Heart left ventricle (tissue), 16 donors: ENCODE measurements at regions of chr12 and their contacts with region 1.

Region 1: DNA sequence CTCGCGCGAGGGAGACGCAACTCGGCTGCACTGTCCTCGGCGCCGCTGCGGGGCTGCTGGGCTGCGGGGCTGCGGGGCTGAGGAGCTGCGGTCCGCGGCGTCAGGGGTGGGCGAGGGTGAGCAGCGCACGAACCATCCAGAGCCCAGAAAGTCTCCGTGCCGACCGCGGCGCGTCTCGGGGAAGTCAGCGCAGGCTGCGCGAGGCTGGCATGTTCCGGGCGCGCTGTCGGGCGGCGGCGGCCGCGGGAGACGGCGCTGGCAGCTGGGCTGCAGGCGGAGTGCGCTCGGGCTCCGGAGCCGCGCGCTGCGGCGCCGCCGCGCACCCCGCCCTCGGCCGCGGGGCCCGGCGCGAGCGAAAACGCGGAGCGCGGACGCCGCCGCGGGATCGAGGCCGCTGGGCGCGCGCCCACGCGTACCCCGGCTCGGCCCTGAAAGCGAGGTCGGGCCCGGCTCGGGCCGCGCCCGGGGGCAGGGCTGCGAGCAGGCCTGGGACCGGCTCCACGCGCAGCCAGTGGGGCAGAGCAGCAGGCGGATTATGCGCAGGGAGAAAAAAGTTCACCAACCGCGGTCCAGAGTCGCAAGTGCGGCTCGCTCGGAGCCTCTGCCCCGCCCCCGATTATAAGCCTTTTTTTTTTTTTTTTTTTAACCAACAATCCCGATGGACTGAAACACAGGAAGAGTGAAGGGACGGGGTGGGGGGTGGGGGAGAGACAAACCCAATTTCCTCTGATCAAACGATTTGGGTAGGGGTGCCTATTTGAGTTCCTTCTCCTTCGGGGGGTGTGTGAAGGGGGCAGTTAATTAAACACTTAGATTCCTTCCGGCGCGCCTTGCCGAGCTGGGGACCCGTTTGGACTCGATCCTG is at the start of gene PRICKLE1:
- DNase-seq: peak; percentile 43 to 73 (median 56)
- ATAC-seq: peak; percentile 47 to 85 (median 68)
- H3K4me3 ChIP-seq: peak within 1 kb of the TSS; percentile 74 to 98 (median 87)
- H3K27ac ChIP-seq: peak within 1 kb of the TSS in 11 of 12 donors; percentile 40 to 90 (median 84)
- H3K4me1 ChIP-seq: peaks cover 0 to 38% (median 21%) of the 10 kb centered on the region in 12 donors
- H3K27me3 ChIP-seq: peaks cover 0 to 33% (median 0%) of the 10 kb centered on the region in 9 donors
- CTCF ChIP-seq: no peak
- POLR2A ChIP-seq: peak in 1 of 2 donors; percentile 20
- total RNA-seq, gene PRICKLE1: 15.5 to 39.2 (median 21.1) TPM

Region 2: GRCh38 chr12:42362647-42363260 is 226.9 kb before region 1 on chr12:
- intact Hi-C with region 1: no loop called
- DNase-seq: no peak
- ATAC-seq: no peak
- H3K4me3 ChIP-seq: no peak overlapping the region
- H3K27ac ChIP-seq: no peak overlapping the region
- H3K4me1 ChIP-seq: peaks cover 0 to 12% (median 0%) of the 10 kb centered on the region in 12 donors
- H3K27me3 ChIP-seq: no peaks in the 10 kb centered on the region
- CTCF ChIP-seq: no peak
- POLR2A ChIP-seq: no peak

Region 3: DNA sequence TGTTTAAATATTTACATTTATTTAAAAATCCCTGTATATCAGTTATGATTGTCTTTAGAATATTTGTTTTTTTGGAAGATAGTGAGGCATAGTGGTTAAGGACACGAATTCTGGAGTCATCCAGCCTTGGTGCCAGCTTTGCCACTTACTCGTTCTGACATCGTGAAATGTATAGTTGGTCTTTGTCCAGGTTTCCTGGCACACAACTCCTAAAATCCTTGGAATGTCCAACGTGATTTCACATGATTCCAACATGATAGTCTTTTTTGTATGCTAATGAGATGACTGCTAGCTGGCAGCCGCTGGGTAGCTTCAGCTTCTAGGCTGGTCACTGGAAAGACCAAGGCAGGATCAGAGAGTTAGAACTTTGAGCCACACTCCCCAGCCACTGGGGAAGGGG is 65.0 kb before region 1 on chr12:
- intact Hi-C with region 1: no loop called
- DNase-seq: no peak
- ATAC-seq: no peak
- H3K4me3 ChIP-seq: no peak overlapping the region
- H3K27ac ChIP-seq: no peak overlapping the region
- H3K4me1 ChIP-seq: no peaks in the 10 kb centered on the region
- H3K27me3 ChIP-seq: no peaks in the 10 kb centered on the region
- CTCF ChIP-seq: no peak
- POLR2A ChIP-seq: no peak

Region 4: GRCh38 chr12:42538203-42538602 is 51.5 kb before region 1 on chr12:
- intact Hi-C with region 1: no loop called
- DNase-seq: no peak
- ATAC-seq: no peak
- H3K4me3 ChIP-seq: no peak overlapping the region
- H3K27ac ChIP-seq: no peak overlapping the region
- H3K4me1 ChIP-seq: peaks cover 0 to 17% (median 0%) of the 10 kb centered on the region in 12 donors
- H3K27me3 ChIP-seq: no peaks in the 10 kb centered on the region
- CTCF ChIP-seq: no peak
- POLR2A ChIP-seq: no peak

Region 5: DNA sequence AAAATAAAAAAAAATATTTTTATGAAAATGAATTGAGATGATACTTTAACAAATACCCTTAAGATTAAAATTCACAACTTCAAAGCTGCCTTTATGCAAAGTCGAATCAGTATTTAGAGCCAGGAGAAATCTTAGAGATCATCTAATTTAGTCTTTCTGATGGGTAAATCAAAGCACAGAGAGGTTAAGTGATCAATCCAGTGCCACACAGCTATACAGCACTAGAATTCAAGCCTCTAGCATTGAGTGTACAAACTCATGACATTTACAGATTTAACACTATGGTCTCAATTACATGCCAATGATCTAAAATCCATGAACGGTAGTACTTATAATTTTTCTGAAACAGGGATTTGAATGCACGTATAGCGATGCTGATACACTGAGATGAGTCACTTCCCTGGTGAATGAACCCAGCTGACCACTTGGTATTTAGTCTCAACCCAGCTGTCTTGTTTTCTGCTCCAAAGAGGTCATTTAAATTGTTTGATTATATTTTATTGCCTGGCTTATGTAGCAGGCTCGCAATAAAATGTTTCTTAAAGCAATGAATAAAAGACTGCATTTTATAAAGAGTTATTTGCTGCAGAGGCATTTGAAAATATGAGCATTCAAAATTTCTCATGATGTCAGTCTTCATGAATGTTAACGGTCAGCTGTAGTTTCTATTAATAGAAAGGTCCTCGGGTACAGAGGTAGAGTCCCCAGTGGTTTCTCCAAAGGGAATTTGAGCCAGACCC is 152.2 kb after region 1 on chr12:
- intact Hi-C with region 1: loop called in 3 of 10 experiments (anchors 2 to 5 kb)
- DNase-seq: no peak
- ATAC-seq: peak; percentile 38 to 83 (median 74)
- H3K4me3 ChIP-seq: no peak overlapping the region
- H3K27ac ChIP-seq: peak overlapping the region; percentile 11 to 89 (median 72)
- H3K4me1 ChIP-seq: peaks cover 4 to 68% (median 23%) of the 10 kb centered on the region in 12 donors
- H3K27me3 ChIP-seq: no peaks in the 10 kb centered on the region
- CTCF ChIP-seq: no peak
- POLR2A ChIP-seq: no peak

Region 6: DNA sequence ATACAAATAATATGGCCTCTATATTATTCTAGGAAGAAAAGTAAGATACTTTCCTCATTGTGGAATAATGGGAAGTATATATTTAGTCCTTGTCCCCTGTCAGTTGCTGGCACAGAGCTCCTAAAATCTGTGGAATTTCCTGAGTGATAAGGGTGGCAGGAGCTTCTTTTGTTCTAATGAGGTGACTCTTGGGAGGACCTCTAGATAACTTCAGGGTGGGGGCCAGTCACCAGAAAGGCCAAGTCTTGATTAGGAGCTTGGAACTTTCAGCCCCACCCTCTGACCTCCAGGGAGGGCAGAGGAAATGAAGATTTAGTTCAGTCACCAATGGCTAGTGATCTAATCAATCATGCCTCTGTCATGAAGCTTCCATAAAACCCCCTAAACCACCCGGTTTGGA is 179.8 kb after region 1 on chr12:
- intact Hi-C with region 1: no loop called
- DNase-seq: peak in 1 of 5 donors; percentile 36
- ATAC-seq: peak in 2 of 4 donors; percentile 55 to 63
- H3K4me3 ChIP-seq: no peak overlapping the region
- H3K27ac ChIP-seq: peak overlapping the region in 2 of 12 donors; percentile 43 to 47
- H3K4me1 ChIP-seq: peaks cover 0 to 19% (median 3%) of the 10 kb centered on the region in 12 donors
- H3K27me3 ChIP-seq: no peaks in the 10 kb centered on the region
- CTCF ChIP-seq: no peak
- POLR2A ChIP-seq: no peak

Region 7: DNA sequence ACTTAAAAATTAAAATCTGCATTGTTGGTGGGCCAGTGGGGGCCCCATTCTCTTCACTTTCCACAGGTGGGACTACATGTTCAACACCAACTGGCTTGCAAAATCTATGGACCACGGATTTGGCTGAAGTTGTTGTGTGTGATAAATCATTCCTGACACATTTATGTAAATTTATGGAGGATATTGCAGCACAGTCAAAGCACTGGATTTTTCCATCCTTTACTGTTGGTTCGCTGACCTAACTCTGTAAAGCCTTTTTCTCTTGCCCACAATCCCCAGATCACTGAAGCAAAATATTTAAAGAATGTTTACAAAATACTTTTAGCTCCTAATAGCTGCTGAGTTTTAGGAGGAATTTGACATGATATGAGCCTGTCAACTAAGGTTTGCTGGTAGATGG is 219.5 kb after region 1 on chr12:
- intact Hi-C with region 1: loop called in 1 of 10 experiments (anchors 5 kb)
- DNase-seq: no peak
- ATAC-seq: no peak
- H3K4me3 ChIP-seq: no peak overlapping the region
- H3K27ac ChIP-seq: no peak overlapping the region
- H3K4me1 ChIP-seq: no peaks in the 10 kb centered on the region
- H3K27me3 ChIP-seq: no peaks in the 10 kb centered on the region
- CTCF ChIP-seq: no peak
- POLR2A ChIP-seq: no peak

Region 8: GRCh38 chr12:42969357-42969756 is 379.7 kb after region 1 on chr12:
- intact Hi-C with region 1: loop called in 3 of 10 experiments (anchors 5 to 10 kb)
- DNase-seq: peak in 4 of 5 donors; percentile 46 to 72 (median 62)
- ATAC-seq: peak; percentile 82 to 97 (median 96)
- H3K4me3 ChIP-seq: no peak overlapping the region
- H3K27ac ChIP-seq: peak overlapping the region in 9 of 12 donors; percentile 2 to 65 (median 35)
- H3K4me1 ChIP-seq: peaks cover 0 to 20% (median 8%) of the 10 kb centered on the region in 12 donors
- H3K27me3 ChIP-seq: no peaks in the 10 kb centered on the region
- CTCF ChIP-seq: no peak
- POLR2A ChIP-seq: no peak

Region 9: GRCh38 chr12:43332977-43333640 is 743.4 kb after region 1 on chr12:
- intact Hi-C with region 1: loop called in 8 of 10 experiments (anchors 1 to 10 kb)
- DNase-seq: no peak
- ATAC-seq: no peak
- H3K4me3 ChIP-seq: no peak overlapping the region
- H3K27ac ChIP-seq: no peak overlapping the region
- H3K4me1 ChIP-seq: peaks cover 0 to 6% (median 0%) of the 10 kb centered on the region in 12 donors
- H3K27me3 ChIP-seq: no peaks in the 10 kb centered on the region
- CTCF ChIP-seq: no peak
- POLR2A ChIP-seq: no peak